ENCODE measurements at regions of chr18 and their contacts with region 1.

Region 1: DNA sequence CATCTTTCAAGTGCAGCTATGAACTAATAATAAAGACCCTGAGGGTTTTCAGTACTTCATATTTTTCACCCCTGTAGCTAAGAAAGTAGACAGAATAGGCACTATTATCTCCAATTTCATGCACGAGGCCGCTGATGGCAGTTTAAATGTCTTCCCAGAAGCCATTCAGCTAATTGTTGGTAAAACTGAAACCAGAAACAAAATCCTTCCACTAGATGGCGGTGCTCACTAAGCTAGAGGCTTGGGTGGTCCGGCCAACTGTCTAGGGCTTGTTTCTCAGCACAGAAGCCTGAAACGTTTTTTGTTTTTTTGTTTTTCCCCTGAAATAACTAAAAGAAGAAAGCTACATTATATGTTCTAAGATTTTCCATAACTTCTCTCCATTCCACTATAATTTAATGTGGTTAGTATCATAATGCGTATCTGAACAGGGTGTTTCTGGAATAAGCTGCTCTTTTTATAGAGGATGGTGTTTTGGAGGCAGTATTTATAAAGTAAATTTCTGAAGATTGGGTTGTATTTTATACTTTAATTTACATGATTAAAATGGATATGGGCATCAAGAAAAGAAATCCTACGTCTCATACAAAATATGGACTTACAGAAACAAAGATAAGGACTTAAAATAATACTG is 159.4 kb downstream of the PIK3C3 start:
- DNase-seq: peak; percentile 61
- H3K4me3 Mint-ChIP-seq: no peak overlapping the region
- H3K27ac Mint-ChIP-seq: no peak overlapping the region
- H3K4me1 Mint-ChIP-seq: peaks cover 10% of the 10 kb centered on the region
- H3K27me3 Mint-ChIP-seq: no peaks in the 10 kb centered on the region

Region 2: DNA sequence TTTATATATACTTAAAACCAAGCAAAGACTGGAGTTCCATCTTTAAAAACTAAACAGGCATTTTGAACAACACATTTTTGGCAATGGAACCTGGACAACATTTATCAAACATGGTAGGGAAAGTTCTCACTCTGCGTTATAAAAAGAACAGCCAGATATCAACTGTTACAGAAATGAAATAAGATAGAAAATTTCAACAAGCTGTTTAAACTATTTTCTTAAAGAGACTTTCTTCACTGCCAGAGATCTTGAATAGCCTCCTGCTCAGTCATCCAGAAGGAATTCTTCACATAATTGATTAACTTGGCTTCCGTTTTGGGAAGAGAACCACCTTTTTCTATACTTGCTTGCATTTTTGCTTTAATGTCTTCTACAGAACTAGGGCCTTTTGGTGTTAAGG is 325.4 kb before region 1 on chr18:
- CTCF ChIA-PET with region 1: no interaction called
- DNase-seq: no peak
- H3K4me3 Mint-ChIP-seq: no peak overlapping the region
- H3K27ac Mint-ChIP-seq: no peak overlapping the region
- H3K4me1 Mint-ChIP-seq: no peaks in the 10 kb centered on the region
- H3K27me3 Mint-ChIP-seq: no peaks in the 10 kb centered on the region

Region 3: GRCh38 chr18:41917181-41917580 is 197.2 kb before region 1 on chr18:
- CTCF ChIA-PET with region 1: no interaction called
- DNase-seq: no peak
- H3K4me3 Mint-ChIP-seq: no peak overlapping the region
- H3K27ac Mint-ChIP-seq: no peak overlapping the region
- H3K4me1 Mint-ChIP-seq: no peaks in the 10 kb centered on the region
- H3K27me3 Mint-ChIP-seq: peaks cover 4% of the 10 kb centered on the region

Region 4: GRCh38 chr18:42053188-42053781 is 61.1 kb before region 1 on chr18:
- CTCF ChIA-PET with region 1: interaction called, 28 read pairs
- DNase-seq: peak; percentile 73
- H3K4me3 Mint-ChIP-seq: no peak overlapping the region
- H3K27ac Mint-ChIP-seq: no peak overlapping the region
- H3K4me1 Mint-ChIP-seq: peaks cover 4% of the 10 kb centered on the region
- H3K27me3 Mint-ChIP-seq: no peaks in the 10 kb centered on the region

Region 5: DNA sequence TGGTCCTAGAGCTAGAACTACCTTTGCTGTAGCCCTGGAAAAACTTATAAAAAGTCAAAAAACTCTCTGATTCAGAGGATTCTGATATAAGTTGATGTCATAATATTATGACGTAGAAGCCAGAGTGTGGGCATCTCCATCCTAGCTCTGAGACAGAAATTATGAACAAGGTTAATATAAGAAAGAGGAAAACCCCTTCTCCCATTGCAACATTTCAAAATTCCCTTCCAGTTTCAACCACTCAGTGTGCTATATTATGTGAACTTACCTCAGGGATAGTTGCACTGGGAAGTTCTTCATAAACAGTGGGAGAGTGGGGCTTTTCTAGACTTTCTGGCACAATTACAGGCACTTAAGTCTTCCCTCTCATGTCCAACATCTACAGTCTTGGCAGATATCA is 12.2 kb after region 1 on chr18:
- CTCF ChIA-PET with region 1: interaction called, 16 read pairs
- DNase-seq: no peak
- H3K4me3 Mint-ChIP-seq: no peak overlapping the region
- H3K27ac Mint-ChIP-seq: no peak overlapping the region
- H3K4me1 Mint-ChIP-seq: no peaks in the 10 kb centered on the region
- H3K27me3 Mint-ChIP-seq: no peaks in the 10 kb centered on the region

Region 6: GRCh38 chr18:42298759-42299675 is 184.6 kb after region 1 on chr18:
- CTCF ChIA-PET with region 1: interaction called, 12 read pairs
- DNase-seq: peak; percentile 63
- H3K4me3 Mint-ChIP-seq: no peak overlapping the region
- H3K27ac Mint-ChIP-seq: no peak overlapping the region
- H3K4me1 Mint-ChIP-seq: no peaks in the 10 kb centered on the region
- H3K27me3 Mint-ChIP-seq: no peaks in the 10 kb centered on the region

Region 7: DNA sequence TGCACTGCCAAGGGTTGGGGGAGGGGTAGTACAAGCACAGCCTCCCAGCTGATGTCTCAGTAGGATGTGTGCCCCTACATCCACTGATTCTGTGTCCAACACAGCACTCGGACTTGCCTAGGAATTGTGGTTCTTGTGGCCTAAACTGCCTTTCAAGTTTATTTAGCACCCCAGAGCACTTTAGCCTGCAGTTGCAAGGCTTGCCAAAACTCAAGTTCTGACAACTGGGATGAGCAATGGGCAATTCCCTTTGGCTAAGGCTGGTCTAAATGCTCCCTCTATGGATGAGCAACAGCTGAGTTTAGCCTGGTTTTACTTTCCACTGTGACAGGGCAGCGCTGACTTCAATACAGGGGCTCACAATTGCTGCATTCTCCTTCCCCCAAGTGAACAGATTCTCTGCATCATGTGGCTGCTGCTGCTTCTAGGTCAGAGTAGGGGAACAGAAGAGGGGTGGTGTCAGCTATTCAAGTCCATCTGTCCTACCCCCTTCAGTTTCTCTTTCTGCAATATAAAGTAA is 312.1 kb after region 1 on chr18:
- CTCF ChIA-PET with region 1: no interaction called
- DNase-seq: no peak
- H3K4me3 Mint-ChIP-seq: no peak overlapping the region
- H3K27ac Mint-ChIP-seq: no peak overlapping the region
- H3K4me1 Mint-ChIP-seq: no peaks in the 10 kb centered on the region
- H3K27me3 Mint-ChIP-seq: no peaks in the 10 kb centered on the region

Region 8: DNA sequence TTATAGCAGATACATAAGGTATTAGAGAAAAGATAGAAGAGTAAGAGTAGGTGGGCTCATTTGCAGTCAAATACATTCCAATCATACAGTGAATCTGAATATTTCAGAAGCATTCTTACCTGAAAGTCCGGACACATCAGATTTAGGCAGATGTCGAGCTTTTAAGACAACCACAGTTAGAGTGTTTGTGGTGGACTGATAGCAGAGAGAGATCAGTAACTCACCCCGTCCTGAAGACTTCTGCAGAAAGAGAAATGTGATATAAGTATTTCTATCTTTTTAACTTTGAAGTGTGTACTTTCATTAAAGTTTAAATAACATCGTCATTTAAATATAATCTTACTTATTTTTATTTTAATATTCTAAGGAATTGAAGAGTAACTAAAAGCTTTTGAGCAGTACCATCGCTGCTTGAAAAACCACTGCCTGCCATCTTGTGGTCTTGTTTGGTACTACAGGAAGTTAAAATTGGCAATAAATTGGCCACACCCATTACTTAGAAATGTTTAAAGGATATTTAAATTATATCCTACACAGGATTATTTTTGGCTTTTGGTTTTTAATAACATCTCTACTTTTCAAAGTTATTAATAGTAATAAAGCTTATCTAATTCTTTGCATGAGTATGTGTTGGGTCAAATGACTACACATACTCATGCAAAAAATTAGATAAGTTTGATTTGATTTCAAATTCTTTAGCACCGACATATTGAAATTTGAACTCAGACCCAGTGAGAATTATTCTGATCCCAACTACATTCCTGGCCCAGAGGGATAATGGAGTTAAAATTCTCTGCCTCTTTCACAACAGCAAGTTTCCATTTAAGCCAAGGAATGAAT is 1157.4 kb after region 1 on chr18:
- CTCF ChIA-PET with region 1: interaction called, 29 read pairs
- DNase-seq: peak; percentile 32
- H3K4me3 Mint-ChIP-seq: no peak overlapping the region
- H3K27ac Mint-ChIP-seq: no peak overlapping the region
- H3K4me1 Mint-ChIP-seq: no peaks in the 10 kb centered on the region
- H3K27me3 Mint-ChIP-seq: no peaks in the 10 kb centered on the region

Region 9: GRCh38 chr18:43587538-43588153 is 1473.2 kb after region 1 on chr18:
- CTCF ChIA-PET with region 1: interaction called, 14 read pairs
- DNase-seq: no peak
- H3K4me3 Mint-ChIP-seq: no peak overlapping the region
- H3K27ac Mint-ChIP-seq: no peak overlapping the region
- H3K4me1 Mint-ChIP-seq: no peaks in the 10 kb centered on the region
- H3K27me3 Mint-ChIP-seq: no peaks in the 10 kb centered on the region